ENCODE measurements at regions of chr7 and their contacts with region 1.

Region 1: DNA sequence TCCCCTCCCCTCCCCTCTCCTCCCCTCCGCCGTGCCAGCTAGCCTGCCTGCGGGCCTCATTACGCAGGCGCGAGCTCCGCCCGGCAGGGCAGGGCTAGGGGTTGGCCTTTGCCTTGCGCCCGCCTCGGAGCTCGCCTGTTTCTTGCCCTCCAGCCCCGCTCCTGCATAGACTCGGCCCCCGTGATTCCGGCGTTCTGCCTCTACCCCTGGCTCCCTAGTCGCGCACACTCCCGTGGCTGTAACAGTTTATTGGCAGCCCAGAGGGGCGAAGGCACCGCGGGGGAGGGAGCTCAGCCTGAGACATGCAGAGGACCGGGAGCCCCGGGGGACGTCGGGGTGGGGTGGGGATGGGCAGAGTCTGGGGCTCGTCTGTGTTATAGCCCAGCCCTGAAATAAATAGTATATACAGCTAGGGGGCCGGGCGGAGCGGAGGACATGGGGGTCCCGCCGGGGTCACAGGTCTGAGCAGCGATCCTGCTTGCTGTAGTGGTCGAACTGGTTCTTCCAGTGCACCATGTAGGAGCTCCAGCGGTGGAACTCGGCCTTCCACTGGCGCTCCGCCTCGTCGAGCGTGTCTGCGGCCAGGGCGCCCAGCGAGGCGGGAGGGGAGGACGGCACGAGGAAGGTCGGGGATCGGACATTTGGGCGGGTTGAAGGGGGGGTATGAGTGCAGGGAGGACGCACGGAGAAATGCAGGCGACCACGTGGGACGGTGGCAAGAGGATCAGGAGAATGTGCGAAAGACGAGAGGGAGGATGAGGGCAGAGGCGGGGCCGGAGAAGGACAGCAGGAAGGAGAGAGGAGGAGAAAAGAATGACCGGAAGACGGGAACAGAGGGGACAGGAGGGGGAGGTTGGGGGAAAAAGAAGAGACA is 483 bp upstream of the UFSP1 start:
- DNase-seq: peak; percentile 87 to 93 (median 91)
- ATAC-seq: peak; percentile 93
- H3K4me3 ChIP-seq: peak overlapping the region; percentile 80
- H3K4me3 Mint-ChIP-seq: peak overlapping the region; percentile 80 to 90 (median 88)
- H3K27ac ChIP-seq: peak overlapping the region; percentile 66
- H3K27ac Mint-ChIP-seq: peak overlapping the region in 6 of 9 donors; percentile 14 to 95 (median 76)
- H3K4me1 ChIP-seq: peaks cover 31 to 45% of the 10 kb centered on the region in 2 donors
- H3K4me1 Mint-ChIP-seq: peaks cover 32 to 48% (median 41%) of the 10 kb centered on the region in 7 donors
- H3K27me3 ChIP-seq: no peaks in the 10 kb centered on the region
- H3K27me3 Mint-ChIP-seq: peaks cover 16 to 40% (median 22%) of the 10 kb centered on the region in 5 donors

Region 2: GRCh38 chr7:98911916-98912315 is 1978.1 kb before region 1 on chr7:
- CTCF ChIA-PET with region 1: no interaction called
- POLR2A ChIA-PET with region 1: no interaction called
- intact Hi-C with region 1: no loop called
- DNase-seq: no peak
- ATAC-seq: no peak
- H3K4me3 ChIP-seq: no peak overlapping the region
- H3K4me3 Mint-ChIP-seq: no peak overlapping the region
- H3K27ac ChIP-seq: no peak overlapping the region
- H3K27ac Mint-ChIP-seq: peak overlapping the region in 2 of 9 donors; percentile 21 to 32
- H3K4me1 ChIP-seq: no peaks in the 10 kb centered on the region
- H3K4me1 Mint-ChIP-seq: no peaks in the 10 kb centered on the region
- H3K27me3 ChIP-seq: no peaks in the 10 kb centered on the region
- H3K27me3 Mint-ChIP-seq: no peaks in the 10 kb centered on the region

Region 3: DNA sequence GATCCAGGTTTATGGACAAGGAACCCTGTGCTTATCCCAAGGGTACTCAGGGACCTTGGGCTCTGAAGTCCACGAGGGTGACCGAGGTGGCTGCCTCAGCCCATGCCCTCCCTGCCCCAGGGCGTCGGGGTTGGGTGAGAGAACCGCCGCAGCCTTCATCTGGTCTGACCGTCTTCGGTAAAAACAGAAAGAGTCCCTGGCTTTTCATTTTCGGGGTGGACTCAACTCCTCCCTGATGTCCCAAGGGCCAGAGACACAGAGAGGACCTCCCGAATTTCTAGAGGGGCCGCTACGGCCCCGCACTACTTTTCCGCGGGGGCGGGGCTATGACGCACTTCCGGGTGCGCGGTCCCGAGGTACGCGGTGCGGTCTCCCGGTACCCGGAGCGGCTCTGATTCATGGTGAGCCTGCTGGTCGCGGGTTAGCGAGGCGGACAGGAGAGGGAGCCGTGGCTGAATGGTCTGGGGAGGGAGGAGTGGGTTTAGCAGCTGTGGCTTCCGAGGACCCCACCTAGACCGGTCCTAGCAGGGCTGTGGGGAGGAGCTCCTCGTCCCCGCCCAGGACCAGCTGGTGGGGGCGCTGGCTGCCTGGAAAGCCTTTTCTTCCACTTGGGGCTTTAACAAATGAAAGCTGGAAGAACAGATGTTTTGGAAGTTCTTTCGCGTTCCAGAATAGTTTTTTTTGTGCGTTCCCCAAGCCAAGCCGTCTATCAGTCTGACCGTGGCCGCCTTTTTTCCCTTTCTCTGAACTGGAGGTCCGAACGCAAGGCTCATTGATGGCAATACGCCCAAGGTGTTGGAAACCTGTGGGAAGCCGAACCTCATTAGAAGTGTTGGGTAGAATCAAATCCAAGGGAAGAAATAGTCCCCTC is 840.3 kb before region 1 on chr7 and contains the start of gene ZSCAN21:
- CTCF ChIA-PET with region 1: no interaction called
- POLR2A ChIA-PET with region 1: no interaction called
- intact Hi-C with region 1: no loop called
- DNase-seq: peak; percentile 70 to 89 (median 78)
- ATAC-seq: peak; percentile 94
- H3K4me3 ChIP-seq: peak within 1 kb of the TSS; percentile 92
- H3K4me3 Mint-ChIP-seq: peak within 1 kb of the TSS; percentile 86 to 95 (median 92)
- H3K27ac ChIP-seq: peak within 1 kb of the TSS; percentile 95
- H3K27ac Mint-ChIP-seq: peak within 1 kb of the TSS; percentile 81 to 98 (median 97)
- H3K4me1 ChIP-seq: peaks cover 0 to 6% of the 10 kb centered on the region in 2 donors
- H3K4me1 Mint-ChIP-seq: peaks cover 4 to 29% (median 25%) of the 10 kb centered on the region in 7 donors
- H3K27me3 ChIP-seq: no peaks in the 10 kb centered on the region
- H3K27me3 Mint-ChIP-seq: peaks cover 0 to 3% (median 0%) of the 10 kb centered on the region in 5 donors
- total RNA-seq, gene ZSCAN21: 3.9 to 10.1 (median 6.2) TPM

Region 4: DNA sequence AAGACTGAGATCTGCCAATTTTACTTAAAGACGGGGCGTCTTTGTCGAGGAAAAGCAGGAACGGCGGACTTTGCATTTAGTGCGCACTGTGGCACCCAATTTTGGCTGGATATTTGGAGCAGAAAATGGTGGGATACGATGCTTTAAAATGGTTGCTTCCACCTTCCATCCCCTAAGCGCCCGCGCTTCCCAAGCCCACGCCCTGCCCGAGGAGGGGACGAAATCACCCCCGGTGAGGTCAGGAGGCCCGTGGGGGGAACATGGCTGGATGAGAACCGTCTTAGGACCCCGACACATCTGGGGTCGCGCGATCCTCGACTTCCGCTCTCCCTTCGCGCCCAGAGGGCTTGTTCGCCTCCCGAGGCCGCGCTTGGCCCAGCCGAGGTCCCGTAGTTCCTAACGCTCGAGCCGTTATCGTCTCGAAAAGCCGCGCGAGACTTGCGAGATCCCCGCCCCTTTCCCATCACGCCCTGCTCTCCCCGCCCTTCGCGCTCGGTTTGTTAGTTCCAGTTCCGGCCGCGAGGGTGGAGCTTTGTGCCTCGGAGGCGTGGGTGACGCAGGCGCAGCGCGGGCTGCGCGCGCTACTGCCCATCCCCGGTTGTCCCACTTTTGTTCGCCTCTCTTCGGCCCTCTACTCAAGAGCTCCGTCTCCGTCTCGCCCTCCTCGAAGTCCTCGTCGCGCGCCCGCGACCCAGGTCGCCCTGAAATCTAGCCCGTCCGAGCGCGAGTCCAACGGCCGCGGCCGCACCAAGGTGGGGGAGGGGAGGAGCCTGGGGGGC is 15.2 kb before region 1 on chr7 and contains the start of gene SRRT:
- CTCF ChIA-PET with region 1: interaction called, 6 read pairs
- POLR2A ChIA-PET with region 1: interaction called, 161 read pairs
- intact Hi-C with region 1: loop called (anchors 1 kb)
- DNase-seq: peak; percentile 92 to 99 (median 97)
- ATAC-seq: peak; percentile 98
- H3K4me3 ChIP-seq: peak within 1 kb of the TSS; percentile 78
- H3K4me3 Mint-ChIP-seq: peak within 1 kb of the TSS; percentile 96 to 100 (median 98)
- H3K27ac ChIP-seq: peak within 1 kb of the TSS; percentile 94
- H3K27ac Mint-ChIP-seq: peak within 1 kb of the TSS; percentile 97 to 99 (median 98)
- H3K4me1 ChIP-seq: peaks cover 22 to 30% of the 10 kb centered on the region in 2 donors
- H3K4me1 Mint-ChIP-seq: peaks cover 27 to 55% (median 52%) of the 10 kb centered on the region in 7 donors
- H3K27me3 ChIP-seq: no peaks in the 10 kb centered on the region
- H3K27me3 Mint-ChIP-seq: no peaks in the 10 kb centered on the region
- total RNA-seq, gene SRRT: 212 to 271 (median 261) TPM

Region 5: GRCh38 chr7:101009629-101010028 is 119.6 kb after region 1 on chr7:
- CTCF ChIA-PET with region 1: no interaction called
- POLR2A ChIA-PET with region 1: no interaction called
- intact Hi-C with region 1: no loop called
- DNase-seq: no peak
- ATAC-seq: no peak
- H3K4me3 ChIP-seq: no peak overlapping the region
- H3K4me3 Mint-ChIP-seq: no peak overlapping the region
- H3K27ac ChIP-seq: no peak overlapping the region
- H3K27ac Mint-ChIP-seq: no peak overlapping the region
- H3K4me1 ChIP-seq: no peaks in the 10 kb centered on the region
- H3K4me1 Mint-ChIP-seq: no peaks in the 10 kb centered on the region
- H3K27me3 ChIP-seq: no peaks in the 10 kb centered on the region
- H3K27me3 Mint-ChIP-seq: peaks cover 0 to 9% (median 0%) of the 10 kb centered on the region in 5 donors

Region 6: DNA sequence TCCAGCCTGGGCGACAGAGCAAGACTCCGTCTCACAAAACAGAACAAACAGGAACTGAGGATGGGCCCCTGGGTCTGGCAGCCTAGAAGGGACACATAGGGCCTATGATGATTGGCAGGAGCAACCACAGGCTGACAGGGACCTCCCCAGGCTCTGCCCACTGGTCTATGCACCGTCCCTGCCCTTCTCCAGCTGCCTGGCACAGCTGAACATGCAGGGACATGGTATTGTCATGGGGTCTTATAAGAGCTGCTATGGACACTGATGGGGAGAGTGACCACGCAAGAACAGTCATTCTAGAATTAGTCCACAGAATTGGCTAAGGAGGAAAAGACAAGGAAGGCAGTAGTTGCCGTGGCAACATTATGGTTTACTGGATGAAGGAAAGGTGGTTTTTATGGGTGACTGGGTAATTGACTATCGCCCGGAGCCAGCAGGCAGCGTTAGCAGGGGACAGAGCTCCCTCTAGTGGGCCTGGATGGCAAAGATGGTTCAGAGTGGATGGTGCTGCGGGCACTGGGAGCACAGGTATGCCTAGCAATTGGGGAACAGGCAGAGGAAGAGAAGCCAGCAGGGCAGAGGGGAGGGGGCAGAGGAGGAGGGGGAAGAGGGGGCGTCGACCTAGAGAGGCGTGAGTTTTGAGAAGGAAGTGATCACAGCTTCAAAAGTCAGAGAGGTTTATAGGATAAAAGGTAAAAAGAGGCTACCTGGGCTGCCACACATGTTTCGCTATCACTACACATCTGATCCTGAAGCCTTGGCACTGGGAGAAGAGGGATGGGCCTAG is 187.5 kb after region 1 on chr7:
- CTCF ChIA-PET with region 1: no interaction called
- POLR2A ChIA-PET with region 1: no interaction called
- intact Hi-C with region 1: loop called (anchors 1 to 5 kb)
- DNase-seq: peak; percentile 66 to 83 (median 78)
- ATAC-seq: peak; percentile 99
- H3K4me3 ChIP-seq: no peak overlapping the region
- H3K4me3 Mint-ChIP-seq: peak overlapping the region in 1 of 10 donors; percentile 5
- H3K27ac ChIP-seq: no peak overlapping the region
- H3K27ac Mint-ChIP-seq: peak overlapping the region in 1 of 9 donors; percentile 4
- H3K4me1 ChIP-seq: no peaks in the 10 kb centered on the region
- H3K4me1 Mint-ChIP-seq: peaks cover 0 to 9% (median 6%) of the 10 kb centered on the region in 7 donors
- H3K27me3 ChIP-seq: no peaks in the 10 kb centered on the region
- H3K27me3 Mint-ChIP-seq: peaks cover 0 to 26% (median 7%) of the 10 kb centered on the region in 5 donors

Region 7: GRCh38 chr7:101165075-101165957 is 275.3 kb after region 1 on chr7 and contains the start of gene VGF:
- CTCF ChIA-PET with region 1: no interaction called
- POLR2A ChIA-PET with region 1: interaction called, 3 read pairs
- intact Hi-C with region 1: loop called in 1 of 2 experiments (anchors 5 kb)
- DNase-seq: peak; percentile 84 to 97 (median 90)
- ATAC-seq: peak; percentile 93
- H3K4me3 ChIP-seq: peak within 1 kb of the TSS; percentile 10
- H3K4me3 Mint-ChIP-seq: peak within 1 kb of the TSS; percentile 58 to 92 (median 77)
- H3K27ac ChIP-seq: no peak within 1 kb of the TSS
- H3K27ac Mint-ChIP-seq: peak within 1 kb of the TSS; percentile 4 to 87 (median 73)
- H3K4me1 ChIP-seq: peaks cover 34 to 40% of the 10 kb centered on the region in 2 donors
- H3K4me1 Mint-ChIP-seq: peaks cover 39 to 56% (median 46%) of the 10 kb centered on the region in 7 donors
- H3K27me3 ChIP-seq: peaks cover 20 to 46% of the 10 kb centered on the region in 2 donors
- H3K27me3 Mint-ChIP-seq: peaks cover 55 to 70% (median 62%) of the 10 kb centered on the region in 5 donors
- total RNA-seq, gene VGF: 0.19 TPM in 1 of 5 experiments, not detected in the others

Region 8: DNA sequence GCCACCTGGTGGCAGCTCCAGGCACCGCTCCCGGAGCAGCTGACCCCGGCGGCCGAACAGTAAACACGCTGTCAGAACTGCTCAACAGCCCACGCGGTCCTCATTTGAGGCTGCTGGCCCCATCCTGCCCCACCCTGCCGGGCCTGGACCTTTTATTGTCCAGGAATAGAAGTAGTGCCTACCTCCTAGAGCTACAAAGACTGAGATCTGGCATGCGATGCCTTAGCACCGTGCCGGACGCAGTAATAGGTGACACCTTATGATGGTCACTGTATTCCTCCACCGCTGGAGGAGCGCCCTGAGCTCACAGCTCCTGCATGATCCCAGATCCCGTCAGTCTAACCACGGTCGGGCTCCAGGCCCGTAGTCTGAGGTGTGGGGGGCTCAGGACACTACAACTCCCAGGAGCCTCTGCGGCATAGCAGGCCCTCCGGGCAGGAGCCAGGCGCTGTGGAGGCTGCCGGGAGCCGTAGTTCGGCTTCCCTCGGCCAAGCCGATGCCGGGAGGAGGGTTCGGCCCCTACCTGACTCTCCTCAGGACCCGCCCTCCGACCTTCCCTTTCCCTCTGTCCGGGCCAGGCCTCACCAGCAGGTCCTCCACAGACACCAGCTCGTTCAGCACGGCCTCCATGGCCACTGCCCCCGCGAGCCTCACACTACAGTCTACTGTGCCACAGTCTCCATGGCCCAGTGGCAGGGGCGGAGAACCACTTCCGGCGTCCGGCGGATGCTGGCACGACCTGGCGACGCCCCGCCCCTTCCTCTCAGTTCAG is 354.6 kb after region 1 on chr7 and contains the start of gene FIS1:
- CTCF ChIA-PET with region 1: no interaction called
- POLR2A ChIA-PET with region 1: interaction called, 3 read pairs
- intact Hi-C with region 1: loop called in 1 of 2 experiments (anchors 2 kb)
- DNase-seq: peak; percentile 87 to 96 (median 94)
- ATAC-seq: peak; percentile 96
- H3K4me3 ChIP-seq: peak within 1 kb of the TSS; percentile 100
- H3K4me3 Mint-ChIP-seq: peak within 1 kb of the TSS; percentile 88 to 100 (median 98)
- H3K27ac ChIP-seq: peak within 1 kb of the TSS; percentile 93
- H3K27ac Mint-ChIP-seq: peak within 1 kb of the TSS; percentile 93 to 100 (median 97)
- H3K4me1 ChIP-seq: peaks cover 14 to 16% of the 10 kb centered on the region in 2 donors
- H3K4me1 Mint-ChIP-seq: peaks cover 16 to 45% (median 35%) of the 10 kb centered on the region in 7 donors
- H3K27me3 ChIP-seq: no peaks in the 10 kb centered on the region
- H3K27me3 Mint-ChIP-seq: no peaks in the 10 kb centered on the region
- total RNA-seq, gene FIS1: 79.8 to 121 (median 107) TPM

Measured in naive thymus-derived CD4-positive, alpha-beta T cell (primary cell).